B cell (primary cell): ENCODE measurements at regions of chr6 and their contacts with region 1.

Region 1: DNA sequence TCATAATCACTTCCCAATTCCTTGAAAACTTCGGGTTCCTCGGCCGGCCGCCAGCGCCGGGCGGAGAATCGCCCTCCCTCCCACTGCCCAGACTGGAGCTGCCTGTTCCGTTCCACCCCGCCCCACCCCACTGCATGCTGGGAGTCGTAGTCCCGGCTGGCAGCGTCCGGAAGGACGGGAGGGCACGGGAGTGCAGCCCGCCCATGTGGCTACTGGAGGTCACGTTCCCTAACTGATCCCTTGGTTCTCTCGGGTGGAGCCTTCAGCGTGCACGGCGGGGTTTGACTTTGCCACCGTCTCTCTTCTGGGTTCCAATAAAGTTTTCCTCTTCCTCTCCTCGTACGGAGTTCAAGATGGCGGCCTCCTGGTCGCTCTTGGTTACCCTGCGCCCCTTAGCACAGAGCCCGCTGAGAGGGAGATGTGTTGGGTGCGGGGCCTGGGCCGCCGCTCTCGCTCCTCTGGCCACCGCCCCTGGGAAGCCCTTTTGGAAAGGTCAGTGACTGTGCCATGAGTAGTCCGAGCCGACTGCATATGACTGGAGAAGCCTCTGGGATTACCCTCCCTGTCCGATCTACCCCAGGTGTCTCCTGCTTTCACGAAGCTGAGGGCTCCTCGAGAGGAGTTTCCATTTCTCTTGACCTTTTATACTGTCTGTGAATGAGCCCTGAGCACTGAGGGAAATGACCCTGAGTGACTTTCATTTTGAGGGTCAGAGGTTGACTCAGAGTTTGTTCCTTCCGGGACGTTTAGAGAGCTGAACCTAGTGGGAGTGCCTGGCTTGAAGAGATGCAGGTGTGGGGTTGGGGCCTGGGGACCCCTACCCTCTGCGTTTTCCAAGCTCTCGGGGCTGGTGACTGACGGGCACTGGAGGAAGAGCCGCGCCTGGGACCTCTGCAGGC is at the start of gene AFG1L:
- DNase-seq: peak; percentile 93
- ATAC-seq: peak; percentile 90
- H3K4me3 ChIP-seq: peak within 1 kb of the TSS; percentile 84 to 98 (median 95)
- H3K4me3 Mint-ChIP-seq: peak within 1 kb of the TSS; percentile 97
- H3K27ac ChIP-seq: peak within 1 kb of the TSS; percentile 91 to 98
- H3K27ac Mint-ChIP-seq: peak within 1 kb of the TSS; percentile 97
- H3K4me1 ChIP-seq: peaks cover 12 to 16% of the 10 kb centered on the region in 2 donors
- H3K4me1 Mint-ChIP-seq: peaks cover 33% of the 10 kb centered on the region
- H3K27me3 ChIP-seq: no peaks in the 10 kb centered on the region
- H3K27me3 Mint-ChIP-seq: no peaks in the 10 kb centered on the region
- CTCF ChIP-seq: no peak
- total RNA-seq, gene AFG1L: 14.2 and 14.4 TPM in 2 replicates

Region 2: DNA sequence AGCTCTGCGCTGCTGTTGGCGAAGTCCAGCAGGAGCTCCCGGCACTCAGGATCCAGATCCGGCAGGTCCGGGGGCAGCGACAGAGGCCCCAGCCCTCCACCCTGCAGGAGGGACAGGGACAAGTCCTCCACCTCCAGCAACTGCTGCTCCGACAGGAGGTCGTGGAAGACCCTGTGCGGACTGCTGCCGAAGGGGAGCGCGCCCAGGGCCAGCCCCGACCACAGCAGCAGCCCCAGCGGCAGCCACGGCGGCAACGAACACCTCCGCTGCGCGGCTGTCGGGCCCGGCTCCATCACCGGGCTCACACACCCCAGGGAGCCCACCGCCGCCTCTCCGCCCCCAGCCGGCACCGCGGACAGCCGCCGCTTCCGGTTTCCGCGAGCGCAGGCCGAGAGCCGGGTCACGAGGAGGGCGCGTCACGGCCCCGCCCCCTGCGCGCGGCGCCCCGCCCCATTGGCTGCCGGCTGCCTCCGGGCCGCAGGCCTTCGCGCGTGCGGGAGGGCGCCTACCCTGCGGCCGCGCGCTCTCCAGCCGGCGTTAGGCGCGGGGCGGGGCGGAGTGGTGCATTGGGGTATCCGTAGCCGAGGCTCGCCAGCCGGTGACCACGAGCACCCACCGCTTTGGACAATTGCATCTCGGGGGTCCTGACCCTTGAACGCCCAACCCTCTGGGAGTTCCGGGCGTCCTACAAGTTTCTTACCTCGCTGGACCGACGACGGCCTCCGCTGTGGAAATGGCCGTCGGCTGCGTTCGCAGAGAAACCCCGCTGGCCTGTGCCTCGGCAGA is 220.4 kb before region 1 on chr6 and contains the start of gene OSTM1:
- CTCF ChIA-PET with region 1: no interaction called
- POLR2A ChIA-PET with region 1: no interaction called
- intact Hi-C with region 1: loop called (anchors 10 kb)
- DNase-seq: peak; percentile 95
- ATAC-seq: peak; percentile 96
- H3K4me3 ChIP-seq: peak within 1 kb of the TSS; percentile 75 to 96 (median 90)
- H3K4me3 Mint-ChIP-seq: peak within 1 kb of the TSS; percentile 89
- H3K27ac ChIP-seq: peak within 1 kb of the TSS; percentile 78 to 91
- H3K27ac Mint-ChIP-seq: peak within 1 kb of the TSS; percentile 93
- H3K4me1 ChIP-seq: peaks cover 15 to 18% of the 10 kb centered on the region in 2 donors
- H3K4me1 Mint-ChIP-seq: peaks cover 29% of the 10 kb centered on the region
- H3K27me3 ChIP-seq: no peaks in the 10 kb centered on the region
- H3K27me3 Mint-ChIP-seq: peaks cover 5% of the 10 kb centered on the region
- CTCF ChIP-seq: no peak
- total RNA-seq, gene OSTM1: 33.2 and 41.7 TPM in 2 replicates

Region 3: GRCh38 chr6:108127826-108128225 is 167.2 kb before region 1 on chr6:
- CTCF ChIA-PET with region 1: no interaction called
- POLR2A ChIA-PET with region 1: no interaction called
- intact Hi-C with region 1: no loop called
- DNase-seq: no peak
- ATAC-seq: no peak
- H3K4me3 ChIP-seq: no peak overlapping the region
- H3K4me3 Mint-ChIP-seq: no peak overlapping the region
- H3K27ac ChIP-seq: no peak overlapping the region
- H3K27ac Mint-ChIP-seq: no peak overlapping the region
- H3K4me1 ChIP-seq: peaks cover 2 to 6% of the 10 kb centered on the region in 2 donors
- H3K4me1 Mint-ChIP-seq: peaks cover 8% of the 10 kb centered on the region
- H3K27me3 ChIP-seq: peaks cover 0 to 55% (median 38%) of the 10 kb centered on the region in 4 experiments
- H3K27me3 Mint-ChIP-seq: peaks cover 84% of the 10 kb centered on the region
- CTCF ChIP-seq: no peak

Region 4: GRCh38 chr6:108348655-108349349 is 53.8 kb after region 1 on chr6:
- CTCF ChIA-PET with region 1: no interaction called
- POLR2A ChIA-PET with region 1: no interaction called
- intact Hi-C with region 1: loop called (anchors 1 kb)
- DNase-seq: peak; percentile 83
- ATAC-seq: peak; percentile 97
- H3K4me3 ChIP-seq: peak overlapping the region in 2 of 5 experiments; percentile 6 to 29
- H3K4me3 Mint-ChIP-seq: peak overlapping the region; percentile 84
- H3K27ac ChIP-seq: peak overlapping the region; percentile 88
- H3K27ac Mint-ChIP-seq: peak overlapping the region; percentile 98
- H3K4me1 ChIP-seq: peaks cover 21 to 31% of the 10 kb centered on the region in 2 donors
- H3K4me1 Mint-ChIP-seq: peaks cover 28% of the 10 kb centered on the region
- H3K27me3 ChIP-seq: no peaks in the 10 kb centered on the region
- H3K27me3 Mint-ChIP-seq: no peaks in the 10 kb centered on the region
- CTCF ChIP-seq: no peak